CD4-positive, alpha-beta memory T cell (primary cell): ENCODE measurements at regions of chr5 and their contacts with region 1.

Region 1: GRCh38 chr5:81657389-81657788 is 93.5 kb downstream of the SSBP2 start:
- DNase-seq: no peak
- H3K4me3 ChIP-seq: no peak overlapping the region
- H3K4me3 Mint-ChIP-seq: no peak overlapping the region
- H3K27ac ChIP-seq: no peak overlapping the region
- H3K27ac Mint-ChIP-seq: no peak overlapping the region
- H3K4me1 ChIP-seq: no peaks in the 10 kb centered on the region
- H3K4me1 Mint-ChIP-seq: peaks cover 14 to 25% (median 17%) of the 10 kb centered on the region in 4 donors
- H3K27me3 ChIP-seq: no peaks in the 10 kb centered on the region
- H3K27me3 Mint-ChIP-seq: no peaks in the 10 kb centered on the region

Region 2: DNA sequence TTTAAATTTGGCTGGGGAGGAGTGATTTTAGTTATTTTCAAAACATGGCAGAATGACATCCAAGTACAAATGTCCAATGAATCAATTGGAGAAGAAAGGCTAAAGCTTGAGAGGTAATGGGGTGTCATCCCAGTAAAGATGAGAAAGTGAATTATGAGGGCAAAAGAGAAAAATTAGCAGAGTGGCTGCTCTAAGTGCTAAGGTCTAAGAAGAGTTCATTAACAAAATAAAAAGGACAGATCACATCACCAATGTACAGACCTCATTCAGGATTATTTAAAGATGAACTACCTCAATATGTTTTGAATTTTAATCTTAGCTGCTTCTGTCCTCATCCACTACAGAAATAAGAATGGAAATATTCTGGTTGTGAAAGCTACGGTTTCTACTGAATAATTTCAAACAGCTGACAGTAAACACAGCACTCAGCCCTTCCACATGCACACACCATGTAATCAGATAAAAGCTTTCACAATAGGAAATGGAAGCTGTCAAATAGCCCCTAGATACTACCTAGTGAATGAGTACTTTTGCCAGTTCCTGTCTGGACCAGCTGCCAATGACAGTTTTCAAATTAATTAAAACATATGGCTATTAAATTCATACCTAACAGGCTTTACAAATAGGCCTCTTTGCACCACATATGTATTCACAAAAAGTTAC is 78.0 kb before region 1 on chr5:
- CTCF ChIA-PET with region 1: no interaction called
- POLR2A ChIA-PET with region 1: no interaction called
- intact Hi-C with region 1: loop called (anchors 10 kb)
- DNase-seq: no peak
- H3K4me3 ChIP-seq: no peak overlapping the region
- H3K4me3 Mint-ChIP-seq: no peak overlapping the region
- H3K27ac ChIP-seq: no peak overlapping the region
- H3K27ac Mint-ChIP-seq: peak overlapping the region in 3 of 7 donors; percentile 1 to 36 (median 4)
- H3K4me1 ChIP-seq: no peaks in the 10 kb centered on the region
- H3K4me1 Mint-ChIP-seq: peaks cover 4 to 16% (median 11%) of the 10 kb centered on the region in 4 donors
- H3K27me3 ChIP-seq: no peaks in the 10 kb centered on the region
- H3K27me3 Mint-ChIP-seq: no peaks in the 10 kb centered on the region